ENCODE measurements at regions of chr15 and their contacts with region 1.

Region 1: GRCh38 chr15:31365655-31366127 is 39.1 kb downstream of the KLF13 start:
- DNase-seq: peak; percentile 71 to 84 (median 77)
- H3K4me3 ChIP-seq: peak overlapping the region in 1 of 2 donors; percentile 17
- H3K4me3 Mint-ChIP-seq: peak overlapping the region; percentile 79 to 91 (median 84)
- H3K27ac ChIP-seq: peak overlapping the region; percentile 82
- H3K27ac Mint-ChIP-seq: peak overlapping the region; percentile 91 to 98 (median 96)
- H3K4me1 ChIP-seq: peaks cover 99% of the 10 kb centered on the region
- H3K4me1 Mint-ChIP-seq: peaks cover 70 to 100% (median 92%) of the 10 kb centered on the region in 4 donors
- H3K27me3 ChIP-seq: no peaks in the 10 kb centered on the region
- H3K27me3 Mint-ChIP-seq: no peaks in the 10 kb centered on the region

Region 2: DNA sequence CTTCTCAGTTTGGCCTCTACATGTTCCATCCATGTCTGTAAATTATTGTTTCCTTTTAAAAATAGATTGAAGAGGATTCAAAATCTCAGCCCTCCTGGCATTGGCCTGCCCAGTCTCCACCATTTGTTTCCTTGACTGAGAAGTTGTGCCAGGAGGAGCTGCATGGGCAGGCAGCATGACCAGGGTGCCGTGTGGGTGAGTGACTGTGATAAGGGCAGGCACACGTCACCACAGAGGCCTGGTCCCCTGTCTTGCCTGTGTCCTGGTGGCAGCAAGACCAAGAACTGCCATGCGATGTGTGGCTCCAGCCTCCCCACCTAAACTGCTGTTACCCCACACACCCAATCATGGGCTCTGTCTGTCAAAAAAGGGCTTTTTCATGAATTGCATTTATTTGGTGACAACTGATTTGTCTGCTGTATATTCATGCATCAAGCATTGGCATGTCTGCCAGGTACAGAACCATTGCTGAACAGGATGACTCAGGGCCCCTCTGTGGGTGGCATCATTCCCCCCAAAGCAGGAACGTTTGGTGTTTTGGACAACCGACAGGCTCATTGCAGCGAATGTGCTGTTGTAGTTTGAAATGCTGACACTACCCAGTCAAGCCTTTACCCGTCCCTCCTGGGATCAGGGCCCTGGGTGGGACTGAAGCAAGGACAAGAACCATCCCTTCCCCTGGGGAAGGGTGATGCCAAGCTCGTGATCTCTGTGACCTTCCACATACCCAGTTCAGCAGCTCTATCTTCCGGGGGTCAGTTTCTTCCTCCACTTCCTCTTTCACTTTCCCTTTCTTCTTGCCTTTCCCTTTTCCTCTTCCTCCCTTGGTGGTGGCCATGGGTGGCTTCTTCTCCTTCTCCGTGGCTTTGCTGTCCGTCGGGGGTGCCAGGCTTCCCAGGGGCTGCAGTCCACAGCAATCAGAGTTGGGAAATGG is 315.7 kb before region 1 on chr15:
- CTCF ChIA-PET with region 1: no interaction called
- POLR2A ChIA-PET with region 1: no interaction called
- intact Hi-C with region 1: no loop called
- DNase-seq: no peak
- H3K4me3 ChIP-seq: no peak overlapping the region
- H3K4me3 Mint-ChIP-seq: peak overlapping the region in 2 of 8 donors; percentile 23 to 53
- H3K27ac ChIP-seq: no peak overlapping the region
- H3K27ac Mint-ChIP-seq: peak overlapping the region in 4 of 7 donors; percentile 21 to 79 (median 44)
- H3K4me1 ChIP-seq: no peaks in the 10 kb centered on the region
- H3K4me1 Mint-ChIP-seq: peaks cover 1 to 6% (median 5%) of the 10 kb centered on the region in 4 donors
- H3K27me3 ChIP-seq: no peaks in the 10 kb centered on the region
- H3K27me3 Mint-ChIP-seq: peaks cover 2 to 4% of the 10 kb centered on the region in 2 donors

Region 3: GRCh38 chr15:31200735-31201151 is 164.9 kb before region 1 on chr15:
- CTCF ChIA-PET with region 1: interaction called, 33 read pairs
- POLR2A ChIA-PET with region 1: interaction called, 5 read pairs
- intact Hi-C with region 1: no loop called
- DNase-seq: peak; percentile 70 to 73 (median 71)
- H3K4me3 ChIP-seq: no peak overlapping the region
- H3K4me3 Mint-ChIP-seq: peak overlapping the region in 2 of 8 donors; percentile 20 to 26
- H3K27ac ChIP-seq: no peak overlapping the region
- H3K27ac Mint-ChIP-seq: peak overlapping the region in 4 of 7 donors; percentile 18 to 87 (median 38)
- H3K4me1 ChIP-seq: peaks cover 26% of the 10 kb centered on the region
- H3K4me1 Mint-ChIP-seq: peaks cover 9 to 30% (median 15%) of the 10 kb centered on the region in 4 donors
- H3K27me3 ChIP-seq: no peaks in the 10 kb centered on the region
- H3K27me3 Mint-ChIP-seq: no peaks in the 10 kb centered on the region

Region 4: DNA sequence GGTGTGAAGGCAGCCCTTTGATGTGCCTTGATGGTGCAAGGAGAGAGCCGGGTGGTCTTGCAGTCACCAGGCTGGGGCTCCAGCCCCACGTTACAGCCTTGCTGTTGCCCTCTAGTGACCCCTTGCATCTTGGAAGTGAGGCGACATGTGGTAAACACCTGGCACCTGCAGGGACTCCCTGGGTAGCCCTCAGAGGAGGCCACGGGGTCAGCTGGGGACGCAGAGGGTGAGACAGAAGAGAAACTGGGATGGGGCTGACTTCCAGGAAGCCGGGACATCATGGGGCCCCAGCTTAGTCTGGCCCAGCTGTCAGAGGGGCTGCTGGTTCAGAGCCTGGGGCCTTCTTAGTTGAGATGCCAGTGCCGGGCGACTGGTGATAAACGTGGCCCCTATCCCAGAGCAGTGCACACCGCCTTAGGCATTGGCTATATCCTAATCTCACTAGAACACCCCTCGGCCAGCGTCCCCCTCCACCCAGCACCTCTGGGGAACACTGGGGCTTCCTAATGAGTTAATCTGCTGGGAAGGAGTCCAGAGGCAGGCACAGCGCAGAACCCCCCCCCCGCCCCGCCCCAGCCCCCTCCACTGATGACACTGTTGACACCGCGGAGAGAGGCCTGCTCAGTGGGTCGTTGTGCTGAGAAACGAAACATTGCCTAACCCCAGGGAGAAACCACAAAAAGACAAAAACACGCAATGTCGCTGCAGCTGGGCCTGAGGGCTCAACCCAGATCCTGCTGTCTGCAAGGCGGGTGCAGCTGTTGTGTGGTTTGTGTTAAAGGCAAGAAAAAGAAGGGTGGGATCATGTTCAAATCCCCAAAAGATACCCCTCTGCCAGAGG is 99.6 kb before region 1 on chr15:
- CTCF ChIA-PET with region 1: interaction called, 16 read pairs
- POLR2A ChIA-PET with region 1: interaction called, 60 read pairs
- intact Hi-C with region 1: loop called (anchors 2 kb)
- DNase-seq: peak; percentile 76 to 84 (median 80)
- H3K4me3 ChIP-seq: peak overlapping the region in 1 of 2 donors; percentile 20
- H3K4me3 Mint-ChIP-seq: peak overlapping the region; percentile 1 to 86 (median 78)
- H3K27ac ChIP-seq: peak overlapping the region; percentile 70
- H3K27ac Mint-ChIP-seq: peak overlapping the region; percentile 70 to 99 (median 96)
- H3K4me1 ChIP-seq: peaks cover 75% of the 10 kb centered on the region
- H3K4me1 Mint-ChIP-seq: peaks cover 62 to 83% (median 74%) of the 10 kb centered on the region in 4 donors
- H3K27me3 ChIP-seq: no peaks in the 10 kb centered on the region
- H3K27me3 Mint-ChIP-seq: no peaks in the 10 kb centered on the region

Region 5: GRCh38 chr15:31352911-31353811 is 12.5 kb before region 1 on chr15:
- CTCF ChIA-PET with region 1: interaction called, 48 read pairs
- POLR2A ChIA-PET with region 1: interaction called, 562 read pairs
- intact Hi-C with region 1: no loop called
- DNase-seq: peak in 4 of 5 donors; percentile 42 to 72 (median 52)
- H3K4me3 ChIP-seq: peak overlapping the region; percentile 15 to 31
- H3K4me3 Mint-ChIP-seq: peak overlapping the region; percentile 76 to 92 (median 85)
- H3K27ac ChIP-seq: peak overlapping the region; percentile 74
- H3K27ac Mint-ChIP-seq: peak overlapping the region; percentile 91 to 99 (median 95)
- H3K4me1 ChIP-seq: peaks cover 100% of the 10 kb centered on the region
- H3K4me1 Mint-ChIP-seq: peaks cover 71 to 100% (median 91%) of the 10 kb centered on the region in 4 donors
- H3K27me3 ChIP-seq: no peaks in the 10 kb centered on the region
- H3K27me3 Mint-ChIP-seq: no peaks in the 10 kb centered on the region

Region 6: DNA sequence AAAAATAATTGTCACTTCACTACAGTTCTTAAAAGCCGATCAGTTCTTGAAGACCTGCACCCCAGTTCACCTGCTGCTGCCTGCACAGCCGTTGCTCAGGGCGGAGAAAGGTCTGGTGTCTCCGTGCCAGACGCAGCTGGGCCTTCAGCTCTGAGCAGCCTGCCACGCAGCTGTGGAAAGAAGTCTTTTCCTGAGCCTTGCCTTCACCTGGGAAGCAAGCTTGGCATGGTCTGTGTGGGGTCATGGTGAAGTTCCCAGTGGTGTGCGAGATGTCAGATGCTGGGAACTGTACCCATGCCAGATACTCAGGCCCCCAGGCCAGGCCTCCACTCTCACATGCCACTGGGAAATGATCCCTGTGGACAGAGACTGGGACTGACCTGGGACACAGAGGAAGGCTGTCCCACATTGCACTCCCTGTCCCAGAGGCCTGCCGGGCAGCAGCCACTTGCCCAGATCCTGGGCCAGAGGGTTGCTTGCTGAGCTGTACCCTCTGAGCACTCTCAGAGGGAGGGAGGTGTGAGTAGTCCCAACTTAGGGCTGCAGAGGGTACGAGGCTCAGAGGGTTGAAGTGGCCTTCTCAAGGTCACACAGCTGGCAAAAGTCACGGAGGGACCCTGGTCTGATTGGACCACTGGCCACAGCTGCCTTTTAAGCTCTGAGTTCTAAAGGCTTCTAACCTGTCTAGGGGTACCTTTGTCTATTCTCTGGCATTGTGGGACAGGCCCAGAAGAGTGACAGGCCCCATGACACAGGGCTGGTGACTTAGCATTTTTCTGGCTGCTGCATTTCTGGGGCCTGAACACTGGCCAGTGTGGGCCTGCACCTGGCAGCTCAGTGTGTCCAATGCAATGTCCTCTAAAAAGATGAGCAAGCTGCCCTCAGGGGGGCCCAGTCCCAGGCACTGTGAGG is 16.4 kb after region 1 on chr15:
- CTCF ChIA-PET with region 1: interaction called, 35 read pairs
- POLR2A ChIA-PET with region 1: interaction called, 30 read pairs
- intact Hi-C with region 1: no loop called
- DNase-seq: no peak
- H3K4me3 ChIP-seq: no peak overlapping the region
- H3K4me3 Mint-ChIP-seq: no peak overlapping the region
- H3K27ac ChIP-seq: no peak overlapping the region
- H3K27ac Mint-ChIP-seq: peak overlapping the region; percentile 54 to 82 (median 78)
- H3K4me1 ChIP-seq: peaks cover 38% of the 10 kb centered on the region
- H3K4me1 Mint-ChIP-seq: peaks cover 33 to 63% (median 45%) of the 10 kb centered on the region in 4 donors
- H3K27me3 ChIP-seq: no peaks in the 10 kb centered on the region
- H3K27me3 Mint-ChIP-seq: no peaks in the 10 kb centered on the region

Region 7: GRCh38 chr15:31442203-31443111 is 76.8 kb after region 1 on chr15:
- CTCF ChIA-PET with region 1: interaction called, 129 read pairs
- POLR2A ChIA-PET with region 1: interaction called, 316 read pairs
- intact Hi-C with region 1: no loop called
- DNase-seq: no peak
- H3K4me3 ChIP-seq: no peak overlapping the region
- H3K4me3 Mint-ChIP-seq: peak overlapping the region; percentile 63 to 75 (median 69)
- H3K27ac ChIP-seq: no peak overlapping the region
- H3K27ac Mint-ChIP-seq: peak overlapping the region in 5 of 7 donors; percentile 63 to 88 (median 68)
- H3K4me1 ChIP-seq: peaks cover 41% of the 10 kb centered on the region
- H3K4me1 Mint-ChIP-seq: peaks cover 27 to 56% (median 37%) of the 10 kb centered on the region in 4 donors
- H3K27me3 ChIP-seq: no peaks in the 10 kb centered on the region
- H3K27me3 Mint-ChIP-seq: no peaks in the 10 kb centered on the region

Region 8: DNA sequence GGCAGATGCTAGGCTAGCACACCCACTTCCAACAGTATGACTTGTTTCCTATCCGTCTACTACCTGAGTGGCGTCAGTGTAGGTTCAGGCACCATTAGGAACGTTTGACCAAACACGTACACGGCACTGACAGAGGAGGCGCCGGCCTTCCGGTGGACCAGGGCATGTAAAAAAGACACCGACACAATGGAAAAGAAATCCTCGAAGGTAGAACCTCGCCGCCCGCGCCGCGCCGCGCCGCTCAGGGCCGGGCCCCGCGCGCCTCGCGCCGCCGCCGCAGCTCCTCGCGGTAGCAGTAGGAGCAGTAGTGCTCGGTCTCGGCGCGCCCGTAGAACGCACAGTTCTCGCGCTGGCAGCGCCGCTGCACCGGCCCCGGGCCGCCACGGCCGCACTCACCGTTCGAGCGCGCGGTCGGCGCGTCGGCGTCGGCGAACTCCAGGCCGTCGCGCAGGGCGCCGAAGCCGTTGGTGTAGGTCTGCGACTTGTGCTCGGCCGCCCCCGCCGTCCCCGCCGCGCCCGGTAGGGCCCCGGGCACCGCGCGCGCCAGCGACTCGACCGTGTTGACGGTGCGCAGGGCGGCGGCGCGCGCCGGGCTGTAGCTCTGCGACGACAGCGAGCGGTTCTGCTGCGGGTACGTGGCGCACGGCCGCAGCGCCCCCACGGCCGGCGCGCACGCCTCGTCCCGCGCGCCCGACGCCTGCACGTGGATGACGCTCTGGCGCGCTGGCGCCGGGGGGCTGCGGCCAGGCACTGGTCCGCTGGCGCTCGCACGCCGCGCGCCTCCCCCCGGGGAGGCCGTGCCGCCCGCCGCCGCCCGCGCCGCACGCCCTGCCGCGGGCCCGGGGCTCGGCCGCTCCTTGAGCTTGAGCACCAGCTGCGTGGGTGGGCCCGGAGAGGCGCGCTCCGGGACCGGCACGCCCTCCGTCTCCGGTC is 117.6 kb after region 1 on chr15:
- CTCF ChIA-PET with region 1: interaction called, 137 read pairs
- POLR2A ChIA-PET with region 1: interaction called, 49 read pairs
- intact Hi-C with region 1: loop called (anchors 1 kb)
- DNase-seq: peak; percentile 48 to 64 (median 56)
- H3K4me3 ChIP-seq: peak overlapping the region in 1 of 2 donors; percentile 29
- H3K4me3 Mint-ChIP-seq: peak overlapping the region; percentile 91 to 96 (median 96)
- H3K27ac ChIP-seq: no peak overlapping the region
- H3K27ac Mint-ChIP-seq: peak overlapping the region; percentile 75 to 97 (median 92)
- H3K4me1 ChIP-seq: peaks cover 46% of the 10 kb centered on the region
- H3K4me1 Mint-ChIP-seq: peaks cover 21 to 69% (median 39%) of the 10 kb centered on the region in 4 donors
- H3K27me3 ChIP-seq: no peaks in the 10 kb centered on the region
- H3K27me3 Mint-ChIP-seq: no peaks in the 10 kb centered on the region

Measured in CD4-positive, alpha-beta memory T cell (primary cell).